Endothelial cell of umbilical vein (primary cell): ENCODE measurements at regions of chr9 and their contacts with region 1.

Region 1: DNA sequence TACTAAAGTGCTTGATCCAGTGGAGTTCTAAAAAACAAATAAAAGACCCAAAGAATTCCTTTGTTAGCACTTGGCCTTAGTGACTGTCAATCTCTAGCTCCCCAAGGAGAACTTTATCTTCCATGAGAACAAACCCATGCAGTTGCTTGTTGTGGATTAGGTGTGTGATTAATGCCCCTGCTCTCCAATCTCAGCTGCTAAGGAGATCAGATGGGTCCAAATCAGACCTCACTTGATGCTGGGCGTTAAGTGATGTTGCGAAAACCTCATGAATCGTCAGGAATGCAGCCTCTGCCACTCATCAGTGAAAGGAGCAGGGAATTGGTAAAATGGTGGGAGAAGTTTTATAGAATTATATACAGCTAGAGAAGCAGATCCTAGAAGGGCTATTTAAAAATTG is 133.7 kb downstream of the DMAC1 start:
- DNase-seq: no peak
- H3K4me3 ChIP-seq: no peak overlapping the region
- H3K27ac ChIP-seq: no peak overlapping the region
- H3K4me1 ChIP-seq: no peaks in the 10 kb centered on the region
- H3K27me3 ChIP-seq: no peaks in the 10 kb centered on the region
- CTCF ChIP-seq: no peak
- POLR2A ChIP-seq: no peak

Region 2: GRCh38 chr9:7707934-7708333 is 42.1 kb after region 1 on chr9:
- CTCF ChIA-PET with region 1: no interaction called
- POLR2A ChIA-PET with region 1: no interaction called
- dilution Hi-C with region 1: no loop called
- intact Hi-C with region 1: loop called (anchors 2 kb)
- DNase-seq: no peak
- H3K4me3 ChIP-seq: no peak overlapping the region
- H3K27ac ChIP-seq: no peak overlapping the region
- H3K4me1 ChIP-seq: no peaks in the 10 kb centered on the region
- H3K27me3 ChIP-seq: no peaks in the 10 kb centered on the region
- CTCF ChIP-seq: no peak
- POLR2A ChIP-seq: no peak